ENCODE measurements at regions of chr19 and their contacts with region 1.

Region 1: DNA sequence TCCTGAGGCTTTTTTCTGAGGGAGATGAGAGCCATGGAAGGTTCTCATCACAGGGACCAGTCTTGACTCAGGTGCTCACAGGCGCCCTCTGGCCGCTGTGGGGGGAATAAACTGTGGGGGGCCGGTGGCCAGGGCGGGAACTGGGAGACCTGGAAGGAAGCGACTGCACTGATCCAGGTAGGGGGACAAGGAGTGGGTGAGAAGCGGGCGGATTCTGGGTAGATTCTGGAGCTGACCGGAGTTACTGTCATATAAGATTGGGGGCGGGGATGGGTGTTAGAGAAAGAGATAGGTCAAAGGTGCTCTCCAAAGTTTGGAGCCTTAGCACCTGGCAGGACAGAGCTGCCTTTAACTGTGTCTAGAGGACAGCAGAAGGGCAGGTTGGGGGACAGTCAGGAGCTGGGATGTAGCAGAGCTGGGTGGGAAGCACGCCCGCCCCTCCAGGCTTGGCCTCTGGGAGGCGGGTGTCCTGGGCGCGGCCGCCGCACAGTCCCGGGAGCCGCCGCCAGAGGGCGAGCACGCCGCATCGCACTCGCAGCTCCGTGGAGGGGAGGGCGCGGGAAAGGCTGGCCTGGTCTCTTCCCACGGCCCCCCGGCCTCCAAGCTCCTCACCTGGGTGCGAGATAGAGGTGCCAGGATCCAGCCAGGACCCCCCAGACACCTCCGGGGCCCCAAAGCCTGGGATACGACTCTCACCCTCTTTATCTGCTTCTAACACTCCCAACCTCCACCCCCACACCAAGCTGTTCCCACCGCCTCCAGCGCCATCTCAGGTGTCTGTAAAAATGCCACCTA is 4.2 kb upstream of the DAND5 start:
- DNase-seq: no peak
- H3K4me3 ChIP-seq: peak overlapping the region; percentile 38
- H3K27me3 ChIP-seq: no peaks in the 10 kb centered on the region
- CTCF ChIP-seq: peak; percentile 84

Region 2: DNA sequence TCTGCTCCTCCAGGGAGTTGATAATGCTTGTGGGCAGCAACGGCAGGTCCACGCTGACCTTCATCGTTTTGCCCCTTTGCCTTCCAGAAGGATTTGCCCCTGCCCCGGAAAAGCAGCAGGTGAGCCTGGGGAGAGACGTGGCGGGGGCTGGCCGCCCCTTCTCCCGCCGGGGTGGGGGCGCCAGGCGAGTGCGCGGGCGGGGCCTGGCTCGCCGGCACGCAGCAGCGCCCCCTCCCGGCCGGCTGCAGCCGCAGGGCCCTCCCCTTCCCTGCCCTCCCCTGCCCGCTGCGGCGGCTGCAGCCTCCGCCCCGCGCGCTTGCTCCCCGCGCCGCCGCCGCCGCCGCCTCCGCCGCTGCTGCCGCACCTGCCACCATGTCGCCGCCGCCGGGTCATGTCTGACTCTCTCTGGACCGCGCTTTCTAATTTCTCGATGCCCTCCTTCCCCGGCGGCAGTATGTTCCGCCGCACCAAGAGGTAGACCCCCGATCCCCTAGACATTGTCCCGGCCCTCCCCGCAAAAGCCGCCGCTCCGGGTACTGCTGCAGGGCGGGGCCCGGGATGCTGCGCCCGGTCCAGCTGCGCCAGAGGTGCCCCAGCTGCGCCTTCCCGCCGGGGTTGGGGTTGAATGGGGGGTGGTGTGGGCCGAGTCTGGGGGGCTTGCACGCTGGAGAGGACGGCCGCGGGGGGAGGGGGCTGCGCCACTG is 126.9 kb before region 1 on chr19 and contains the start of gene MAST1:
- CTCF ChIA-PET with region 1: no interaction called
- POLR2A ChIA-PET with region 1: no interaction called
- DNase-seq: no peak
- H3K4me3 ChIP-seq: no peak within 1 kb of the TSS
- H3K27me3 ChIP-seq: peaks cover 42% of the 10 kb centered on the region
- CTCF ChIP-seq: no peak; the same call in 1 of the 2 replicates
- polyA plus RNA-seq, gene MAST1: 0.25 TPM in 1 of 2 replicates, not detected in the other

Region 3: GRCh38 chr19:12945479-12946091 is 19.6 kb before region 1 on chr19 and contains the start of gene RAD23A:
- CTCF ChIA-PET with region 1: interaction called, 28 read pairs
- POLR2A ChIA-PET with region 1: interaction called, 3 read pairs
- DNase-seq: peak; percentile 80
- H3K4me3 ChIP-seq: peak within 1 kb of the TSS; percentile 69
- H3K27me3 ChIP-seq: no peaks in the 10 kb centered on the region
- CTCF ChIP-seq: no peak
- polyA plus RNA-seq, gene RAD23A: 49.2 and 75.1 TPM in 2 replicates

Region 4: DNA sequence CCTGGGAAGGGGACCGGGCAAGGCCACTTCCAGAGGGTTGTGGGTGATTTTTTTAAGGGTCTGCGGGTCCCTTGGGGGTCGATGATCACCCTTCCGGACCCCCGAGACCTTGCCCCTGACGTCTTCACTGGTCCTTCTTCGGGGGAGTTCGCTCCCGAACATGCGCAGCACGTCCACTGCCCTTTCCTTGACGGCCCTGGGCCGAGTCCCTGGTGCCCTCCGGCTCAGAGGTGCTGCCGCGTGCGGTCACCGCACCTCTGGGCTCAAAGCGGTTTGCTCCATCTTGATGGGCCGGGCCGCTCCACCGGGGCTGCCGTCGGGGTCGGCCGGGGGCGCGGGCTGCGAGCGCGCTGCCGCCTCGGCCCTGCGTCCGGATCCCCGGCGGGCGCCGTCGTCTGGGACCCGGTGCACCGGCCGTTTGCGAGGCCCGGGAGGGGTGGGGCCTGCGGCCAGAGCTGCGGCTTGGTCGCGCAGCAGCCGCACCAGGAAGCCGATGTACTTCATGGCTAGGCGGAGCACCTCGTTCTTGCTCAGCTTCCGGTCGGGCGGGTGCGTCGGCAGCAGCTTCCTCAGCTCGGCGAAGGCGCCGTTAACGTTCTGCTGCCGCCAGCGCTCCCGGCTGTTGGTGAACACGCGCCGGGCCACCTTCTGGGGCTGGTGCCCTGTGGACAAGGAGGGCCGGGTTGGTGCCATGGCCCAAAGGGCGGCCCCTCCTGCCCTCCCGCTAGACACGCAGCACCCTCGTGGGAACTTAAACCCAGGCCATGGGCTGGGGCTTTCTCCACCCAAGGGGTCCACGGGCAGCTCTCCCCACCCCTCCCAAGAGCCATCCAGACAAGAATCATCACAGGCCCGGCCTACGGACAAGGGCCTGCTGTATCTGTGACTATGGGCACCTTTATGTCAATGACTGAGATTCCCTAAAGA is 134.1 kb after region 1 on chr19:
- CTCF ChIA-PET with region 1: interaction called, 20 read pairs
- POLR2A ChIA-PET with region 1: no interaction called
- DNase-seq: no peak
- H3K4me3 ChIP-seq: no peak overlapping the region
- H3K27me3 ChIP-seq: no peaks in the 10 kb centered on the region
- CTCF ChIP-seq: no peak

Region 5: GRCh38 chr19:13262450-13262849 is 297.2 kb after region 1 on chr19:
- CTCF ChIA-PET with region 1: interaction called, 25 read pairs
- POLR2A ChIA-PET with region 1: no interaction called
- DNase-seq: peak; percentile 6
- H3K4me3 ChIP-seq: no peak overlapping the region
- H3K27me3 ChIP-seq: no peaks in the 10 kb centered on the region
- CTCF ChIP-seq: peak; percentile 52

Region 6: DNA sequence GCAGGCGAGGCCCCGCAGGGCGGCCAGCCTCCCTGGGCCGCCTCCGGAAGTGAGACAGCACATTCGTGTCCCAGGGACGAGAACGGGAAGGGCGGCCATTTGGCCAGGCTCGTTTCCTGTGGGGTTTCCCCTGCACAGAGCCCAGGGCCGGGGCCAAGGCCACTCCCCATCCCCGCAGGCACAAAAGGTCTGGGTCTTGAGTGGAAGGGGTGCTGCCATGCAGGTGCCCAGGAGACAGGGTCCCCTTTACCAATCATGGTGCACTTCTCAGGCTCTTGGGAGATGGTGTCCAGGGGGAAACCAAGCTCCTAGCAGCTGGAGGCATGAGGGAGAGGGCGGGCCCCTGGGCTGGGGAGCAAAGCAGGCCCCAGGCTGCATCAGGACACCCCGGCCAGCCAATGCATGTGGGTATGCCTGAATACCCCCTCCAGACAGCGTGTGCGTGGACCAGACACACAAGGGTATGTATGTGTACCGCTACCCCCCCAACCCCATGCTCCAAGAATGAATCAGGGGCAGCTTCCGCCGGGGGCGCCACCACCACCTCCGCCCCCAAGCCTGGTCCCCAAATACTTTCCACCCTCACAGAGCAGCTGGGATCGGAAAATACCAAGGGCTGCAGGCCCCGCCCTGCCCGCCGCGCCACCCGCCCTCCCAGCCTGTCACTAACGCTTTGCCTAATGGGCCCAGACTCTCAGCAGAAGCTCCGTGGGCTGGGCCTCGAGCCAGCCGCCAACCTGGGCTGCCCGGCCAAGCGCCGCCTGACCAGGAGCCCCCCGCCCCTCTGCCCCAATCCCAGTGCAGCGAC is 874.1 kb after region 1 on chr19:
- CTCF ChIA-PET with region 1: no interaction called
- POLR2A ChIA-PET with region 1: interaction called, 13 read pairs
- DNase-seq: no peak
- H3K4me3 ChIP-seq: peak overlapping the region; percentile 66
- H3K27me3 ChIP-seq: no peaks in the 10 kb centered on the region
- CTCF ChIP-seq: no peak